CD4-positive, alpha-beta T cell (primary cell): ENCODE measurements at regions of chr1 and their contacts with region 1.

Region 1: GRCh38 chr1:117128323-117129079 is 7.0 kb upstream of the TRIM45 start:
- DNase-seq: peak in 3 of 14 experiments; percentile 50 to 51 (median 51)
- ATAC-seq: peak; percentile 49
- H3K4me3 ChIP-seq: no peak overlapping the region
- H3K4me3 Mint-ChIP-seq: no peak overlapping the region
- H3K27ac ChIP-seq: no peak overlapping the region
- H3K27ac Mint-ChIP-seq: no peak overlapping the region
- H3K4me1 ChIP-seq: no peaks in the 10 kb centered on the region
- H3K4me1 Mint-ChIP-seq: no peaks in the 10 kb centered on the region
- H3K27me3 ChIP-seq: peaks cover 0 to 4% of the 10 kb centered on the region in 2 experiments
- H3K27me3 Mint-ChIP-seq: peaks cover 9% of the 10 kb centered on the region
- CTCF ChIP-seq: peak; percentile 65

Region 2: GRCh38 chr1:116724765-116725375 is 403.6 kb before region 1 on chr1:
- CTCF ChIA-PET with region 1: interaction called, 3 read pairs
- POLR2A ChIA-PET with region 1: no interaction called
- intact Hi-C with region 1: loop called (anchors 1 to 2 kb)
- DNase-seq: peak; percentile 56 to 90 (median 72)
- ATAC-seq: no peak
- H3K4me3 ChIP-seq: no peak overlapping the region
- H3K4me3 Mint-ChIP-seq: no peak overlapping the region
- H3K27ac ChIP-seq: no peak overlapping the region
- H3K27ac Mint-ChIP-seq: no peak overlapping the region
- H3K4me1 ChIP-seq: peaks cover 3% of the 10 kb centered on the region
- H3K4me1 Mint-ChIP-seq: peaks cover 22% of the 10 kb centered on the region
- H3K27me3 ChIP-seq: no peaks in the 10 kb centered on the region
- H3K27me3 Mint-ChIP-seq: no peaks in the 10 kb centered on the region
- CTCF ChIP-seq: peak; percentile 97

Region 3: DNA sequence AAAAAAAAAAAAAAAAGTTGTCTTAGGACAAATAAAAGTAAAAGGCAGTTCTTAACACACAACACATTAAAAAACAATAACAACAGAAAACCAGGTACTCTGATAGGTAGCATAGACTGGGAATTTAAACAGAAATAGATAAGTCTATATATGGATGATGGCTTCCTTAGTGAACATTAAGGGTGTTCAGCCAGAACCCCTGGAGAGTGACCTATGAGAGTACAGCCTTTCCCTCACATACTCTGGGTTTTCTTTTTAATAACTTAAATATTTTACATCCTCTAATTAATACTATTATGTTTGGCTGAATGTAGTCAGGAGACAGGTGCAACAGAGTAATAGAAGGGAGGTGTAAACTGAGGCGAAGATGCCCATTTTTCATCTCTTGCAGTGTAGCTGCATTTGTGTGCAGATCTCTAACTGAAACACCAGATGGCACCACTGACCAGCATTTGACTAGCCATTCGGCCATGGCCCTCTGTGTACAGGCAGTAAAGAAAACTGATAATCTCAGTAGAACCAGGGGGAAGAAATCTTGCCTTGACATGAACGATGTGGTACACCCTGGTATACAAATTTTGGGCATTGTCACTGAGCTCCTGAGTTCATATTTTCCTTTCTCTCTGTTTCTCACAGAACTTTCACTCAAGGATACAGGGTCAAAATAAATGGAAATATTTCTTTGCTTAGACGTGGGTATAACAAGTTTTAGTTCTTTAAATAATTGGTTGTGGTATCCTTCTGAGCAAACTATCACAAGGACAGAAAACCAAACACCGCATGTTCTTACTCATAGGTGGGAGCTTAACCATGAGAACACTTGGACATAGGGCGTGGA is 60.7 kb before region 1 on chr1:
- CTCF ChIA-PET with region 1: interaction called, 31 read pairs
- POLR2A ChIA-PET with region 1: no interaction called
- intact Hi-C with region 1: loop called (anchors 1 to 5 kb)
- DNase-seq: peak in 8 of 14 experiments; percentile 7 to 68 (median 38)
- ATAC-seq: peak; percentile 79
- H3K4me3 ChIP-seq: no peak overlapping the region
- H3K4me3 Mint-ChIP-seq: no peak overlapping the region
- H3K27ac ChIP-seq: no peak overlapping the region
- H3K27ac Mint-ChIP-seq: no peak overlapping the region
- H3K4me1 ChIP-seq: no peaks in the 10 kb centered on the region
- H3K4me1 Mint-ChIP-seq: peaks cover 25% of the 10 kb centered on the region
- H3K27me3 ChIP-seq: no peaks in the 10 kb centered on the region
- H3K27me3 Mint-ChIP-seq: no peaks in the 10 kb centered on the region
- CTCF ChIP-seq: peak; percentile 62